Sciatic nerve (tissue), 2 donors: ENCODE measurements at regions of chr6 and their contacts with region 1.

Region 1: DNA sequence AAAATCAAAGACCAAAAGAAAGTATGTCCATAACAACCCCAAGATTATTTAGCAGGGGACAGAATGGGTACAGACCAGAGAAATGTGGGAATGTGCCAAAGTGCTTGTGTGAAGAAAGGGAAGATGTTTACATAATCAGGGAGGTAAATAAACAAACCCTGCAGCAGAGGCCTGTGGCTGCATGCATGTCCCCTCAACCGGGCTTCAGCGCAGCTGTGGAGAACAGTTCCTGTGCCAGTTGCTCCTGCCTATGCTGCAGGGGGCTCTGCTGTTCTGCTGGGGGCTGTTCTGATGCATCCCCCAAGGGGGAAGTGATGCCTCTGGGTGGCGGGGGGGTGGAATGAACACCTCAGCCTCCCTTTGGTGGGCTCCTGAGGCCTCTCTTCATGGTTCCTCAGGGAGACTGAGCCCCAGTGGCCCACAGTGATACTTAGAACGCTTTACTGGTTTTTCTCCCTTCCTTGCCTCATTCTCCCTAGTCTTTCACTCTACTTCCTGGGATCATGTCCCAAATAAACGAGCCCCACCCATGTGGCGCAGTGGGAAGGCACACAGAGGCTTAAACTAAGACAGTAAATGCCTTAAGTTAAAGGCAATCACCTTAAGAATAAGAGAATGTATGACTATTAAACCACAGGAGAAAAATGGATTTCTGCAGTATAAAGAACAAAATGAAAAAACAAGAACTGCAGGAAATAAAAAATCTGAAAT is 23.0 kb downstream of the RAB23 start:
- DNase-seq: no peak
- ATAC-seq: peak; percentile 75

Region 2: DNA sequence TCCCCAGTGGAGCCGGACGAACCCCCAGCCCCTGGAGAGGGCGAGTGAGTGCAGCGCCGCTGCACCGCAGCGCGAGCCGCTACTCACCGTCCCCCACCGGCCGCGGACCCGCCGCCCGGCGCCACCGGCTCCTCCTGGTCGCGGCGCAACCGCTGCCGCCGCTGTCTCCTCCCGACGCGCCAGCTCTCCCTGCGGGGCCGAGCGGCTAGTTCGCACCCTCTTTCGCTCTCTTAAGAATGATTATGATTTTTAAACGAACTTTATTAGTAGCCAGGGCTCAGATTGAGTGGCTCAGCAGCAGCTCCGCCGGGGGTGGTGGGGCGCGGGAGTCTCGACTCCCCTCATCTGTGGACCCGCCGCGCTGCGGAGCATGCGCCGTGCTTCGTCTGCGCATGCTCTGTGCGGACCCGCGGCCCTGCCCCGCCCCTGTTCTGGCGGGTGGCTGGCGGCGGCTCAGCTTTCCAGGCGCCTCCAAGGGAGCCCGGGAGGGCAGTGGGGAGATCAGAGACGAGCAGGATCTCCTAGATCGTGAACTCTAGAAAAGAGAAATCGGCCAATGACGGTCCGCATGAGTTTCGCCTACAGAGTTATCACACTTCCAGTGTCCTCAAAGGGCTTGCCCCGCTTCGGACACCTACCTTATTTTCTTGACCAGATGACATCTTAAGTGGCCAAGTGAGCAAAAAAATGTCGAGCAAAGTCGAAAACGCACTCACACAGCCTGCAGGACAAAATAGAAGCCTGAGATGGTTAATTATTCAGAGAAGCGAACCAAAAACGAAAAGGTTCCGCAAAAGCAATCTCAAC is 23.1 kb after region 1 on chr6 and contains the start of gene RAB23:
- intact Hi-C with region 1: loop called (anchors 1 kb)
- DNase-seq: peak; percentile 91
- ATAC-seq: peak; percentile 98
- total RNA-seq, gene RAB23: 28.4 TPM